CD8-positive, alpha-beta memory T cell (primary cell): ENCODE measurements at regions of chr12 and their contacts with region 1.

Region 1: GRCh38 chr12:130747867-130748740 is 32.0 kb upstream of the RIMBP2 start:
- DNase-seq: peak; percentile 34 to 72 (median 48)
- H3K4me3 ChIP-seq: no peak overlapping the region
- H3K4me3 Mint-ChIP-seq: peak overlapping the region in 2 of 7 donors; percentile 7 to 40
- H3K27ac ChIP-seq: no peak overlapping the region
- H3K27ac Mint-ChIP-seq: peak overlapping the region in 1 of 8 donors; percentile 84
- H3K4me1 ChIP-seq: no peaks in the 10 kb centered on the region
- H3K4me1 Mint-ChIP-seq: peaks cover 7 to 10% (median 9%) of the 10 kb centered on the region in 3 donors
- H3K27me3 ChIP-seq: no peaks in the 10 kb centered on the region
- H3K27me3 Mint-ChIP-seq: peaks cover 5 to 22% of the 10 kb centered on the region in 2 donors

Region 2: DNA sequence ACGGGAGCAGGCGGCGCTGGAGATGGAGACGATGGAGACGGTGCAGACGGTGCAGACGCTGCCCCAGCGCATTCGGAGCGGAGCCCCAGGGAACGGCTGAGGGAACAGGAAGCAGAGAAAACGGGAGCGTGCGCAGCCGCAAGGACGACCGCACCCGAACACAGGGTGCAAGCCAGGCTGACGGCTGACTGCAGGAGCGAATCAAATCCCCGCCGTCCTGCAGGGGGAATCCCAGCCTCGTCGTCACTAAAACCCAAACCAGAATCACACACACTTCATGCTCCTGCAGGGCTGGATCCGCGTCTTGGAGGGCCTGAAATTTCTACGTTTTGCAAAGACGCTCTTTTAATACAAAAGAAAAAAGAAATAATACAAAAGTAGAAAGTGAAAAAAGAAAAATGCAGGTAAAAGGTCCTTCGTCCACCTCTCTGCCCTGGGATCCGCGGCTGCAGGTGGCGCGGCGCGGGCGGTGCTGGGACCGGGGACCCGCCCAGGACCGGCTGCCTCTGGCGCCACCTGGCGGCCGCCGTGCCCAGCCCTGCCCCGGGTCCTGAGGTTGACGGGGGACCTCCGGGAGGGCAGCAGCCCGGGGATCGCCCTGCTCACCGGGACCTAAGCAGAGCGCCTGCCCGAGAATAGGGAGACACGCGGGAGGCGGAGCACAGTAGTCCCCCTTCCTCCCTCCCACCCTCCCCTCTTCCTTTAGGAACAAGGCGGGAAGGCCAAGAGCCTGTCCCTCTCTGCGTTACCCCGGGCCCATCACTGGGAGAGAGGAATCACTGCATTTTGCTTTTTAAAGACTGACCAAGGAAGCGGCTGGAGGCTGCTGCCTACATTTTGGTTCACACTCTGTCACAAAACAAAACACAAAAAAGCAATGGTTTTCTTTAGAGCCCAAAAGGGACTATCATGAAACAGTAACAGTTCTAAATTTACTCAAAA is 70.8 kb after region 1 on chr12:
- CTCF ChIA-PET with region 1: interaction called, 10 read pairs
- POLR2A ChIA-PET with region 1: no interaction called
- DNase-seq: peak; percentile 69 to 77 (median 70)
- H3K4me3 ChIP-seq: peak overlapping the region; percentile 78
- H3K4me3 Mint-ChIP-seq: peak overlapping the region; percentile 85 to 91 (median 89)
- H3K27ac ChIP-seq: peak overlapping the region; percentile 24
- H3K27ac Mint-ChIP-seq: peak overlapping the region; percentile 43 to 92 (median 83)
- H3K4me1 ChIP-seq: no peaks in the 10 kb centered on the region
- H3K4me1 Mint-ChIP-seq: peaks cover 14 to 32% (median 23%) of the 10 kb centered on the region in 3 donors
- H3K27me3 ChIP-seq: no peaks in the 10 kb centered on the region
- H3K27me3 Mint-ChIP-seq: peaks cover 0 to 3% of the 10 kb centered on the region in 2 donors